ENCODE measurements at regions of chr1 and their contacts with region 1.

Region 1: DNA sequence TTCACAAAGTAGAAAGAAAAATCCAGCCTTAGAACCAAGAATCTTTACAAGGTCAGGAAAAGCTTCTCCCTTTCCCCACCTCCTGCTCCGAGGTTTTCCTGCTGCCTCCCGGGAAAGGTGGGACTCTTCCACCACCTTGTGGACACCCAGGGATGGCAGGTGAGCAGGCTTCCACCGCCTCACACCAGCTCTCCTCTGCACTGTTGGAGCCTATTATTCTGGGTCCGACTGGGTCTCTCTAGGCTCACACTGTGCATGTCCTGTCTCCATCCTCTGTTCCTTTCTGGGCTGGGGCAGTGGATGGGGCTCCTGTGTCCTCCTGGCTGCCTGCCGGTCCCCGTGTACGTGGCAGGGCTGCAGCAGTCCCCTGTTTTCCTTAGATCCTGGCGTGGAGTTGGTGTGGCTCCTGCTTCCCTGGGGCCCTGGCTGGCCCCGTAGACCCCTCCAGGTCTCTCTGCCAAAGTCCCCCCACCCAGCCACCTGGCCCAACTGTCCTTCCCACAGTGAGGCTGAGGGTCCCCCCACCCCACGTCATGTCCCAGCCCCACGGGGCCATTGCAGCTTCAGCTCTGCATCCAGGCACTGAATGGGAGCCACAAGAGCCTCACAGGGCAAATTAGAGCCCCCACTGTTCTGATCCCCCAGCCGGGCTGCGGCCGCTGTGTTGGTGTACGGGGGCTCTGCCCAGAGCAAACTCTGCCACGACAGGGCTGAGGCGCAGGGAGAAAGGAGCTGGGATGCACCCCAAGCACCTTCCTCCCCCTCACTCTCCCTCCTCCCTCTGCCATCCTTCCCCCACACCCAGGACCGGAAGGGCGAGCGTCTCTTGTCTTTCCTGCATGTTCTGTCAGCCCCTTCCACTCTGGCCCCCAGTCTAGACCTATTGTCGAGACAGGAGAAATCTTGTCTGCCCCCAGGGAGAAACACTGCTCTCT is 3.3 kb upstream of the SLC45A1 start:
- DNase-seq: peak; percentile 85
- H3K4me3 ChIP-seq: no peak overlapping the region
- H3K27ac ChIP-seq: no peak overlapping the region
- H3K4me1 ChIP-seq: peaks cover 0 to 22% (median 18%) of the 10 kb centered on the region in 4 donors
- H3K27me3 ChIP-seq: peaks cover 31% of the 10 kb centered on the region
- CTCF ChIP-seq: peak; percentile 82 to 97 (median 86)
- EP300 ChIP-seq: no peak
- POLR2A ChIP-seq: no peak

Region 2: DNA sequence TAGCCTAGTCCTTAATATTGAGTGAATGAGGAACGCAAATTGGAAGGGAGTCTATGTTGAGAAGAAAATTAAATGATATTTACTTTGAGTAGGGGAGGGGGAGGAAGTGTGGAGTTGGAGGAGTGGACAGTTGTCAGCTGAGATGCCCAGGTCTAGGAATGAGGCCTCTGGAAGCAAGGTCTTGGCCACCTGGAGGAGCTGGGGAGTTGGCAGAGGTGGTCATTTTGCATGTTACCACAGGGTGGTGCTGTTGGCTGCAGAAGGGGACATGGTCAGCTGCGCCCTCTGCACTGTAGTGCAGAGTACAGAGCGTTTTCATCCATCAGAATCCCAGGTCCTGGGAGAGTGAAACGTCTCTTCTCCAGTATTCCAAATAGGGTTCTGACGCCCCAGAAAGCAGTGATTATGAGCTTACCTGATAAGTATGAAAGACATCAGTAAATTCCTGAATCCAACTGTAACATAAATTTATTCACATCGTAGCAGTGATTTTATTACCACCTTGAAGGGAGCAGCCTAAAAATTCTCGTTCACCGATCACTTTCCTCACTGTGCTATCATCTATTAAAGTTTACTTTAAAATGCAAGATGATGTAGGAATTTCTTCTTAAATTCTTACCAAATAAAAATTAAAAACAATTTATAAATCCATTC is 339.3 kb before region 1 on chr1:
- in situ Hi-C with region 1: loop called in 3 of 4 experiments (anchors 10 kb)
- intact Hi-C with region 1: no loop called
- DNase-seq: peak; percentile 80
- H3K4me3 ChIP-seq: no peak overlapping the region
- H3K27ac ChIP-seq: no peak overlapping the region
- H3K4me1 ChIP-seq: peaks cover 0 to 5% (median 0%) of the 10 kb centered on the region in 4 donors
- H3K27me3 ChIP-seq: no peaks in the 10 kb centered on the region
- CTCF ChIP-seq: peak; percentile 74 to 90 (median 87)
- EP300 ChIP-seq: no peak
- POLR2A ChIP-seq: no peak

Region 3: DNA sequence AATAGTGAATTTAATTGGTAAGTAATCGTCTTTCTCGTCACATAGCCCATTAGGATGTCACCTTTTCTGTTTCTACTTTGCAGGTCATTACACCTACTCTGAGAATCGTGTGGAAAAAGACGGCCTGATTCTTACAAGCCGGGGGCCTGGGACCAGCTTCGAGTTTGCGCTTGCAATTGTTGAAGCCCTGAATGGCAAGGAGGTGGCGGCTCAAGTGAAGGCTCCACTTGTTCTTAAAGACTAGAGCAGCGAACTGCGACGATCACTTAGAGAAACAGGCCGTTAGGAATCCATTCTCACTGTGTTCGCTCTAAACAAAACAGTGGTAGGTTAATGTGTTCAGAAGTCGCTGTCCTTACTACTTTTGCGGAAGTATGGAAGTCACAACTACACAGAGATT is 329.8 kb before region 1 on chr1:
- in situ Hi-C with region 1: loop called in 2 of 4 experiments (anchors 10 kb)
- intact Hi-C with region 1: loop called (anchors 2 kb)
- DNase-seq: no peak
- H3K4me3 ChIP-seq: no peak overlapping the region
- H3K27ac ChIP-seq: no peak overlapping the region
- H3K4me1 ChIP-seq: peaks cover 0 to 8% (median 4%) of the 10 kb centered on the region in 4 donors
- H3K27me3 ChIP-seq: no peaks in the 10 kb centered on the region
- CTCF ChIP-seq: no peak
- EP300 ChIP-seq: no peak
- POLR2A ChIP-seq: no peak

Region 4: DNA sequence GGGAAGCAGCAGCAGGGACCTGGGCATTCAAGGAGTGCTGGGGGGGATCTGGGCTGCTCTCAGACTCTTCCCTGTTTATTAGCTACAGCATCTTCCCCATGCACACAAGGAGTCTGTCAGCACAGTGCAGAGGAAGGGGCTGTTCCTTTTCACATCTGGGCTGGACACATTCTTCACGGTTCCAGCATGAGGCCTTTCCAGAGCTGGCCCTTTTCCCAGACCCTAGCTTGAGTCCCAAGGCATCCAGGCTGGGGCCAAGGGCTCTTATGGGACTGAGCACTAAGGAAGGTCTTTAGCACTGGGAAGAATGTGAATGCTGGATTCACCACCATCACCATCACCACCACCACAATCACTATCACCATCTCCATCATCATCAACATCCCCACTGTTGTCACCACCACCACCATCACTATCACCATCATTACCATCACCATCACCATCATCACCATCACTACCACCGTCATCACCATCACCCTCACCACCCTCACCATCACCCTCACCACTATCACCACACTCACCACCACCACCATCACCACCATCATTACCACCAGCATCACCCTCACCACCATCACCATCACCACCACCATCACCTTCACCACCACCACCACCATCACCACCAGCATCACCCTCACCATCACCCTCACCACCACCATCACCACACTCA is 324.7 kb before region 1 on chr1:
- in situ Hi-C with region 1: loop called in 2 of 4 experiments (anchors 10 kb)
- intact Hi-C with region 1: loop called (anchors 2 kb)
- DNase-seq: no peak
- H3K4me3 ChIP-seq: no peak overlapping the region
- H3K27ac ChIP-seq: no peak overlapping the region
- H3K4me1 ChIP-seq: no peaks in the 10 kb centered on the region
- H3K27me3 ChIP-seq: no peaks in the 10 kb centered on the region
- CTCF ChIP-seq: no peak
- EP300 ChIP-seq: no peak
- POLR2A ChIP-seq: no peak

Region 5: GRCh38 chr1:8015036-8015808 is 299.4 kb before region 1 on chr1:
- in situ Hi-C with region 1: loop called (anchors 5 to 10 kb)
- intact Hi-C with region 1: no loop called
- DNase-seq: peak; percentile 41
- H3K4me3 ChIP-seq: no peak overlapping the region
- H3K27ac ChIP-seq: peak overlapping the region; percentile 57 to 75 (median 70)
- H3K4me1 ChIP-seq: peaks cover 29 to 55% (median 41%) of the 10 kb centered on the region in 4 donors
- H3K27me3 ChIP-seq: no peaks in the 10 kb centered on the region
- CTCF ChIP-seq: peak; percentile 60 to 79 (median 62)
- EP300 ChIP-seq: no peak
- POLR2A ChIP-seq: no peak

Region 6: DNA sequence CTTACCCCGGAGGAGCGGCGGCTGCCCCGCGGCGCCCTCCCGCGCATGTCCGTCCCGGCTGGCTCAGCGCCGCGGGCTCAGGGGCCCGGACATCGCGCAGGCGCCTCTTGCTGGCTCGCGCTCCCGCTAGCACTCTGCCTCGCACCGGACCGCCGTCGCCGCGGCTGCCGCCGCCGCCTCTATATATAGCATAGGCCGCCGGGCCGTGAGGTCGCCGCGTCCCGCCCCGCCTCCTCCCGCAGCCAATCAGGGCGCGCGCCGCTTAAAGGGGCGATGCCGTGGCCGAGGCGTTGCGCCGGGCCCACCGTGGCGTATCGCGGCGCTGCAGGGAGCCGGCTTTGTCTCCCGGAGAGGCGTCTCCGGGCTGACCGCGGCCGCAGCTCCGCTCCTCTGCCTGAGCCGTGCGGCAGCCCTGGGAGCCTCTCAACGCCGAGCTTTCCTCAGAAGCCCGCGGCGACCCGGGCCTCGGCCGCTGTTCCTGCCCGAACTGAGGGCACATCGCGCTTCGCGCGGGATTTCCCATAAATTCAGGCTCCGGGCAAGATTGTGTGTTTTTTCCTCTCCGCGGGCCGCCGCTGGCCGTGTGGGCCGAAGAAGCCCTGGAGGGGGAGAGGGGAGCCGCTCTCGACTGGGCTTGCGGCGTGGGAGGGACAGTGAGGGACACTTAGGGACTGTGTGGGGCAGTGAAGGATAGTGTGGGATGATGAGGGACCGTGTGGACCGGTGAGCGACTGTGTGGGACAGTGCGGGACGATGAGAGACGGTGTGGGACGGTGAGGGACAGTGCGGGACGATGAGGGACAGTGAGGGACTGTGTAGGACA is 288.2 kb before region 1 on chr1 and contains the start of gene ERRFI1:
- in situ Hi-C with region 1: no loop called
- intact Hi-C with region 1: loop called (anchors 5 kb)
- DNase-seq: peak; percentile 95
- H3K4me3 ChIP-seq: peak within 1 kb of the TSS; percentile 68 to 92 (median 90)
- H3K27ac ChIP-seq: peak within 1 kb of the TSS; percentile 92 to 96 (median 94)
- H3K4me1 ChIP-seq: peaks cover 13 to 71% (median 41%) of the 10 kb centered on the region in 4 donors
- H3K27me3 ChIP-seq: no peaks in the 10 kb centered on the region
- CTCF ChIP-seq: peak in 1 of 5 experiments; percentile 4
- EP300 ChIP-seq: no peak
- POLR2A ChIP-seq: peak; percentile 95
- total RNA-seq, gene ERRFI1: 10.0 to 101 (median 70.0) TPM

Region 7: GRCh38 chr1:8477166-8477982 is 162.8 kb after region 1 on chr1:
- in situ Hi-C with region 1: no loop called
- intact Hi-C with region 1: no loop called
- DNase-seq: no peak
- H3K4me3 ChIP-seq: no peak overlapping the region
- H3K27ac ChIP-seq: peak overlapping the region; percentile 28 to 45 (median 28)
- H3K4me1 ChIP-seq: peaks cover 6 to 40% (median 14%) of the 10 kb centered on the region in 4 donors
- H3K27me3 ChIP-seq: no peaks in the 10 kb centered on the region
- CTCF ChIP-seq: no peak
- EP300 ChIP-seq: no peak
- POLR2A ChIP-seq: no peak